Posterior cingulate gyrus (tissue), 11 donors: ENCODE measurements at regions of chr17 and their contacts with region 1.

Region 1: GRCh38 chr17:48101012-48101720 is at the start of gene CBX1:
- DNase-seq: peak; percentile 92 to 99 (median 94)

Region 2: GRCh38 chr17:48131216-48131824 is 30.2 kb after region 1 on chr17:
- intact Hi-C with region 1: no loop called
- DNase-seq: peak in 4 of 10 donors; percentile 48 to 69 (median 50)

Region 3: GRCh38 chr17:48830840-48831548 is 729.8 kb after region 1 on chr17 and contains the start of gene CALCOCO2:
- intact Hi-C with region 1: loop called (anchors 5 kb)
- DNase-seq: peak; percentile 86 to 99 (median 95)